ENCODE measurements at regions of chr12 and their contacts with region 1.

Region 1: DNA sequence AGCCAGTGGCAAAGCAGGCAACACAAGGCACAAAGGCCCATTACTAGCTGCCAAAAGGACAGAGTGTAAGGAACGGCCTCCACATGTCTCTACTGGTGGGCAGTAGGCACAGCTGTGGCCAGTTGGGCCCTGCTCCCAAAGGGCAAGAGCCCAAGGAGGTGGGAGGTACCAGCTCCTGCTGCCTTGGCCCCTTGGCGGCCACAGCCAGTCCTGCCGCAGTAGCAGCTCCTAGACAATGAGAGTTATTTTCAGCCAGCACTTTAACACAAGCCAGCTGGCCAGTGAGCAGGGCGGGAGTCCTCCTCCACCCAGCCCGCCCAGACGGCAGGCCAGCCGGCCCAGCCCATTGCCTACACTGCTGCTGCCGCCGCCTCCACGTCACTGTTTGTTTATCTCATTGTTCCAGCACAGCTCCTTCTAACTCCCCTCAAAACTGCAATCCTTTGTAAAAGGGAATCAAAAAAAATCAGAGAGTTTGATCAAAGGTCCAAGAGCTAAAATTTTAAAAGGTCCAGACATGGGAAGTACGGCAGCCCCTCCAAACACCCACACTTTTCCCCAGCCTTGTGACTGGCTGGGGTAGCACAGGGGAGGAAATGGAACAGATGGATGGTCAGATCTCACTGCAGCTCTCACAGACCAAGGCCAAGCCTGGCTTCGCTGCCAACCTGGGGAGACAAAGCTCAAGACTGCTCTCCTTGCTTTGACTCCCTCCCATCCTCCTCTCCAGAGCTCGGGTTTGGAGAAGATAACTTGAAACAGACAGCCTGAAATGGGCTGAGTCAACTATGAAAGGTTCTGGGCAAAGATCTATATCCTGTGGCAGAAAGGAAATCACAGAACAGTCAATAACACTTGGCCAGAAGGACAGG is 33.5 kb downstream of the FMNL3 start:
- DNase-seq: no peak
- ATAC-seq: no peak; the same call in 2 of the 3 replicates
- H3K4me3 ChIP-seq: no peak overlapping the region
- H3K27ac ChIP-seq: peak overlapping the region; percentile 92
- H3K4me1 ChIP-seq: peaks cover 56% of the 10 kb centered on the region
- H3K27me3 ChIP-seq: no peaks in the 10 kb centered on the region
- CTCF ChIP-seq: no peak
- EP300 ChIP-seq: no peak
- POLR2A ChIP-seq: no peak
- RAD21 ChIP-seq: no peak

Region 2: GRCh38 chr12:49687941-49688340 is 14.3 kb after region 1 on chr12:
- CTCF ChIA-PET with region 1: interaction called, 60 read pairs
- POLR2A ChIA-PET with region 1: interaction called, 55 read pairs
- RAD21 ChIA-PET with region 1: interaction called, 36 read pairs
- SMC1A ChIA-PET with region 1: interaction called, 131 read pairs
- in situ Hi-C with region 1: no loop called
- intact Hi-C with region 1: no loop called
- DNase-seq: no peak
- ATAC-seq: peak; percentile 20; the same call in 1 of the 3 replicates
- H3K4me3 ChIP-seq: no peak overlapping the region
- H3K27ac ChIP-seq: no peak overlapping the region
- H3K4me1 ChIP-seq: peaks cover 55% of the 10 kb centered on the region
- H3K27me3 ChIP-seq: no peaks in the 10 kb centered on the region
- CTCF ChIP-seq: no peak
- EP300 ChIP-seq: no peak
- POLR2A ChIP-seq: no peak
- RAD21 ChIP-seq: no peak

Region 3: GRCh38 chr12:50715174-50715573 is 1041.5 kb after region 1 on chr12:
- CTCF ChIA-PET with region 1: no interaction called
- POLR2A ChIA-PET with region 1: no interaction called
- RAD21 ChIA-PET with region 1: no interaction called
- SMC1A ChIA-PET with region 1: no interaction called
- in situ Hi-C with region 1: no loop called
- intact Hi-C with region 1: no loop called
- DNase-seq: no peak
- ATAC-seq: no peak
- H3K4me3 ChIP-seq: no peak overlapping the region
- H3K27ac ChIP-seq: no peak overlapping the region
- H3K4me1 ChIP-seq: no peaks in the 10 kb centered on the region
- H3K27me3 ChIP-seq: no peaks in the 10 kb centered on the region
- CTCF ChIP-seq: no peak
- EP300 ChIP-seq: no peak
- POLR2A ChIP-seq: no peak
- RAD21 ChIP-seq: no peak

Measured in GM12878 (cell line).